ENCODE measurements at regions of chr11 and their contacts with region 1.

Region 1: DNA sequence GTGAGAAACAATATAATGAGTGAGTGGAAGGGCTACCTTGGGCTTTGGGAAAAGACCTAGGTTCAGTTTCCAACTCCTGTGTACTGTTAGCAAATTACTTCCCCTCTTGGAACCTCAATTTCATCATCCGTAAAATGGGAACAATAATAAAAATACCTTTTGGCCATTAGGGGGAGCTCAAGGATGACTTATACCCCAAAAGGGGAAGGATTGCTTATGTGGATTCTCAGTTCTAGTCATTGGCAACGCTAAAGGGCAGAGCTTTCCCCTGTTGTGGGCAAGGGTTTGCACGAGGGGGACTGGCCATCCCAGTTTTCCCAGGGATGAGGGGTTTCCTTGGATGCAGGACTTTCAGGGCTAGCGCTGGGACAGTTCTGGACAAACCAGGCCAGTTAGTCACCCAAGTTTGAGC is 3.1 kb upstream of the COMMD9 start:
- DNase-seq: no peak
- ATAC-seq: no peak

Region 2: DNA sequence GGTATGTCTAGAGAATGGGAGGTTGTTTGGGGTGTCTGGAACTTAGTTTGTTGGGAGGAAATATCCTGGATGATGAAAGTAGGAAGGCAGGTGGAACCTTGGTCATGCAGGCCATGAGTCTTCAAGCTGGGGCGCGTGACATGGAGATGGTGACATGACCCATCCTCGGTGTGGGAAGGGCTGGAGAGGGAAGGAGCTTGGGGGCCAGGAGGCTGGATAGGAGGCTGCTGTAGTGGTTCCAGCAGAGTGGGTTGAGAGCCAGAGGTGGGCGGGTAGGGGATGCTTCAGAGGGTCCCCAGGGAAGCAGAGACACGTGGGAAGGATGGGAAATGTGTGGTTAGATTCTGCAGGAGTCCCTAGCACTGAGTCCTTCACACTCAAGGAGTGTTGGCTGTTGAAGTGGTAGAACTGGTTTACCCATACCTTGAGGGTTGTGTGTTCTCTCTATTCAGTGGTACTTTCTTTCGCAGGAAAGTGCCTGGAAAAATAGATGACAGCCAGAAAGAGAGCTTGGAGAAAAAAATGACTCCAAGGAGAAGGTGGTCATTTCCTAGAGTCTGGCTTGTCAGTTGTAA is 291.6 kb before region 1 on chr11:
- intact Hi-C with region 1: no loop called
- DNase-seq: no peak
- ATAC-seq: no peak

Region 3: DNA sequence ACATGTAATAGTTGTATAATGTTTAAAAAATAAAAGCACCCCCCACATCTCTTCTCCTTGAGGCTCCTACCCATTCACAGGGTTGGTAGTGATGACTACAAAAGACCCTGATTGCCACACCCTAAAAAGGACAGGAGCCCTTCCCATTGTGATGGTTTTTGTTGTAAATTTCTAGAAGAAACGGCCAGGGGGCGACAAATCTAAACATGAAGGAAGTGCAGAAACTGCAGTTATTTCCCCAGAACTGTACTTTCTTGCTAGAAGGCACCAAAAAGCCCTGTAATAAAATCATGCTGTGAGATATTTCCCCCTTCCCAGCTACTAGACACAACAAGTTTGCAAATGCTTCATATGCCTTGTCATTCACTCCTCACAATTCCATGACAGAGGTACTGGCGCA is 14.6 kb after region 1 on chr11:
- intact Hi-C with region 1: no loop called
- DNase-seq: no peak
- ATAC-seq: no peak

Region 4: DNA sequence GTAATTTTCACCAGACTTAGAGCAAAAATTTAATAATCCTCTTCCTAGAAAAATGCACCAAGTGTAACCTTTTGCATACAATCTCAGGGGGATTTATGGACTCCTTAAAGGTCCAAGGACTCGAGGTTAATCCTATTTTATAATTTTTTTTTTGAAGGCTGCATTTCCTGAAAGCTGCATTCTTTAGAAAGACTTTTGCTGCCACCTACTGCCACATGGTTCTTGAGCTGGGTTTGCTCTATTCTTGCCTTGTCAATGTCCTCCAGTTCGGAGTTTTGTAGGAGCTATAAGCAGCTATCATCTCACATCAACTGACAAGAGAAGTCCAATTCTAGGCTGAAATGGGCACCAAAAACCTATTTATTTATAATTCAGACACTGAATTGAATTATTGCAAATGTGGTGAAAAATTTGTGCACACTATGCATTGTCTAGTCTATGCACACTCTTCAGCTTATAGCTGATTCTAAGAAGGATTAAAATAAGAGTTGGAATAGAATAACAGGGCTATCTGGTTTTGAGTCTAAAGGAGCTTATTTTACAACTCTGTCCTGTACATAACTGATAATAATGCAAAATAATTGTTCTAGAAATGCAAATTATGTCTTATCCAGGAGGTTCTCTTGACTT is 186.5 kb after region 1 on chr11:
- intact Hi-C with region 1: loop called (anchors 5 kb)
- DNase-seq: no peak
- ATAC-seq: peak; percentile 64

Region 5: GRCh38 chr11:36492724-36493304 is 200.5 kb after region 1 on chr11:
- intact Hi-C with region 1: loop called (anchors 5 kb)
- DNase-seq: no peak
- ATAC-seq: peak; percentile 42